Breast epithelium (tissue), 4 donors: ENCODE measurements at regions of chr4 and their contacts with region 1.

Region 1: DNA sequence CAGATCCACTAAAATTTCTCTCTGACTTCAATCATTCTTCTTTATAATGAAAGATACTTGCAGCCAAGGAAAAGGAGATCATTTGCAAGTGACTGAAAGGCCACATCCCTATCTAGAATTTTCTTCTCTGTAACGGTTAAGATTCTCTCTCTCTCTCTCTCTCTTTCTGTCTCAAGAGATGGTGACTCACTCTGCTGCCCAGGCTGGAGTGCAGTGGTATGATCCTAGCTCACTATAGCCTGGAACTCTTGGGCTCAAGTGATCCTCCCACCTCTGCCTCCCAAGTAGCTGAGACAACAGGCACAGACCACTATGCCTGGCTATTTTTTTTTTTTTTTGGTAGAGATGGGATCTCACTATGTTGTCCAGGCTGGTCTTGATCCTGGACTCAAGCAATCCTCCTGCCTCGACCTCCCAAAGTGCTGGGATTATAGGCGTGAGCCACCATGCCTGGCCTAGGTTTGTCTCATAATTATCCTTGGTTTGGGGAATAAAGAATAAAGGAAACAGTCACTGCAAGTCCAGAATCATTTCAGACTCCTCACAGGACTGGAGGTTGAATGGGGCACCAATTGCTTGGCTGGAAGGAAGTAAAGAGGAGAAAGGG is 33.3 kb upstream of the GALNT7 start:
- DNase-seq: no peak
- H3K4me3 ChIP-seq: no peak overlapping the region
- H3K27ac ChIP-seq: no peak overlapping the region
- H3K4me1 ChIP-seq: no peaks in the 10 kb centered on the region
- H3K27me3 ChIP-seq: no peaks in the 10 kb centered on the region
- CTCF ChIP-seq: no peak
- POLR2A ChIP-seq: no peak

Region 2: GRCh38 chr4:172648471-172648870 is 486.9 kb before region 1 on chr4:
- intact Hi-C with region 1: no loop called
- DNase-seq: no peak
- H3K4me3 ChIP-seq: no peak overlapping the region
- H3K27ac ChIP-seq: no peak overlapping the region
- H3K4me1 ChIP-seq: no peaks in the 10 kb centered on the region
- H3K27me3 ChIP-seq: no peaks in the 10 kb centered on the region
- CTCF ChIP-seq: no peak
- POLR2A ChIP-seq: no peak

Region 3: DNA sequence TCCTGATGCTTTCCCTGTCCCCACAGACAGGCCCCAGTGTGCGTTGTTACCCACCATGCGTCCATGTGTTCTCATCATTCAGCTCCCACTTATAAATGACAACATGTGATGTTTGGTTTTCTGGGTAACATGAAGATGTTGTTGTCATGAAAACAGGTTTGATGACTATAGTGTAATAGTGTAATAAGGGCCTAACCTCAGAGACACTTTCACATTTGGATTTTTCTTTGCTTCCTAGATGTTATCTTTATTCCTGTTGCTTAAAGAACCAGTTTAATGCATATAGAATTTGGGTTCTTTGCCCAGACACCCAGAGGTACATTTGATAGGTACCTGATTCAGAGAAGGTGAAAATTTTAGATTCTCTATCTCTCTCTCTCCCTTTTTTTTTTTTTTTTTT is 61.3 kb after region 1 on chr4:
- intact Hi-C with region 1: loop called (anchors 2 kb)
- DNase-seq: no peak
- H3K4me3 ChIP-seq: no peak overlapping the region
- H3K27ac ChIP-seq: no peak overlapping the region
- H3K4me1 ChIP-seq: peaks cover 0 to 5% of the 10 kb centered on the region in 2 donors
- H3K27me3 ChIP-seq: no peaks in the 10 kb centered on the region
- CTCF ChIP-seq: no peak
- POLR2A ChIP-seq: no peak